Activated CD4-positive, alpha-beta memory T cell treated with anti-CD3 and anti-CD28 coated beads for 36 hours (primary cell): ENCODE measurements at regions of chr11 and their contacts with region 1.

Region 1: DNA sequence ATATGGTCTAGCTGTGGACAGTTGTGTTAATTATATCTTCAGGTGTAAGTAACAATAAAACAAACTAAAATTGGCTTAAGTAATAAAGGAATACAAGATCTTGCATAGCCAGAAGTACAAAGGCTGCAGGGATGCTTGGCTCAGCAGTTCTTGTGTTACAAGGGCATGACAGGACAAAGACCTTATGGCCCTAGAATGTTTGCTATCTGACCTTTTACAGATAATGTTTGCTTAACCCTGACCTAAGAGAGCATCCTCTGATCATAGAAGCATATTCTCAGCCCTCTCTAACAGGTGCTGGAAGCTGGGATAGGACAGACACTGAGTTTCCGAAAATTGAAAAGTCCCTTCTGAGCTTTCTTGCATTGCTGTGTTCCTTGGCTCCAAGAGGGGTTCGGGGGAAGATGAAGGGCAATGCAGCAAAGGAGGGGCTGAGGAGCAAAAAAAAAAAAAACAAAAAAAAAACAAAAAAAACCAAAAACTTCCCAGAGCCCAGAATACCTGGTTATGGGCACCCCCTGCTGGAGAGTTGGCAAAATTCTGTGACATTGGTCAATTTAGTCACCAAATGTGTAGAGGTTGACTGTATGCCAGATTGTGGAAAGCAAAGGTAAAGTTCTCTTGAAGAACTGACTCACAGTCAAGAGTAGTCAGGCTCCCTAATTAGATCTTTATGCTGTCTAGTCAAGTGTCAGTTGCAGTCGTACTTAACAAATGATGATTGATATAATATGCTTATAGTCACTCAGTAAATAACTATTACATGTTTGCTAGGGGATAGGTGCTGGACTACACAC is 10.4 kb upstream of the HIKESHI start:
- DNase-seq: peak; percentile 82
- H3K4me3 Mint-ChIP-seq: peak overlapping the region; percentile 30
- H3K27ac Mint-ChIP-seq: peak overlapping the region; percentile 95
- H3K4me1 Mint-ChIP-seq: peaks cover 68% of the 10 kb centered on the region
- H3K27me3 Mint-ChIP-seq: no peaks in the 10 kb centered on the region

Region 2: GRCh38 chr11:85752890-85753581 is 538.6 kb before region 1 on chr11:
- CTCF ChIA-PET with region 1: no interaction called
- POLR2A ChIA-PET with region 1: no interaction called
- intact Hi-C with region 1: loop called (anchors 1 kb)
- DNase-seq: peak; percentile 94
- H3K4me3 Mint-ChIP-seq: peak overlapping the region; percentile 70
- H3K27ac Mint-ChIP-seq: peak overlapping the region; percentile 96
- H3K4me1 Mint-ChIP-seq: peaks cover 95% of the 10 kb centered on the region
- H3K27me3 Mint-ChIP-seq: peaks cover 3% of the 10 kb centered on the region

Region 3: GRCh38 chr11:85867751-85868150 is 423.9 kb before region 1 on chr11:
- CTCF ChIA-PET with region 1: no interaction called
- POLR2A ChIA-PET with region 1: no interaction called
- intact Hi-C with region 1: no loop called
- DNase-seq: no peak
- H3K4me3 Mint-ChIP-seq: no peak overlapping the region
- H3K27ac Mint-ChIP-seq: no peak overlapping the region
- H3K4me1 Mint-ChIP-seq: peaks cover 3% of the 10 kb centered on the region
- H3K27me3 Mint-ChIP-seq: no peaks in the 10 kb centered on the region

Region 4: DNA sequence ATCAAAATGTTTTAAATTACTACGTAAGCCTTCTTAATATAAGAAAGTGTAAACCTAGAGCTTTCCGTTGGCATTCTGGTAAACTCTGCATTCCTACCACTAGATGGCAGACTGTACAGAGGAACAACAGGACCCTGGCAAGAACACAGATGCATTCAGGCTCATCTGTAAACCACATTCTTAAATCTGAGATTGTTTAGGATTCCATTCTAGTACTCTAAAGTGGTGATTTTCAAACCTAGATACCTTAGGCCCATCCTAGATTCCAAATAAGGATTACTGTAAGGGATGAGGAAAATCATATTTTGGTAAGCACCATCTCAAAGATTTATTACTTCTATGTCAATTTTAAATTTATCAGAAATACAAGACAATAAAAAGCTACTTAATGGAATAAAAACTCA is 249.7 kb before region 1 on chr11:
- CTCF ChIA-PET with region 1: interaction called, 17 read pairs
- POLR2A ChIA-PET with region 1: interaction called, 3 read pairs
- intact Hi-C with region 1: loop called (anchors 1 kb)
- DNase-seq: peak; percentile 48
- H3K4me3 Mint-ChIP-seq: no peak overlapping the region
- H3K27ac Mint-ChIP-seq: peak overlapping the region; percentile 58
- H3K4me1 Mint-ChIP-seq: peaks cover 71% of the 10 kb centered on the region
- H3K27me3 Mint-ChIP-seq: no peaks in the 10 kb centered on the region

Region 5: DNA sequence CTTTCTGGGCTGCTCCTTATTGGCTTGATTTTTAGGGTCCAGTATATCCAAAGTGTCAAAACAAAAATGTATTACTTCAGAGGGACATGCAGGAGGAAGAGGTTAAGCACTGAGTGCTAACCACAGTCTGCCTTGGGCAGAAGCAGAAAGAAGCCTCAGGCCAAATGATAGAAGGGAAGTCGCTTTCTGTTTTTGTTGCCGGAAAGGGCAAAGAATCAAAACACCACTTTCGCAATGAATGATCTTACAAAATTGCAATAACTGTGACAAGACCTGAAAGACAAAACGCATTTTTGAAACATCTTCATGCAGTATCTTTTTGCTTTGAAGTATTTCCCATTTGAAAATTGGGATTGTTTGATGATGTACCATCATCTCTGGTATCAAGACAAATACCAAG is 152.7 kb before region 1 on chr11:
- CTCF ChIA-PET with region 1: no interaction called
- POLR2A ChIA-PET with region 1: no interaction called
- intact Hi-C with region 1: loop called (anchors 1 kb)
- DNase-seq: peak; percentile 61
- H3K4me3 Mint-ChIP-seq: peak overlapping the region; percentile 20
- H3K27ac Mint-ChIP-seq: peak overlapping the region; percentile 70
- H3K4me1 Mint-ChIP-seq: peaks cover 45% of the 10 kb centered on the region
- H3K27me3 Mint-ChIP-seq: no peaks in the 10 kb centered on the region

Region 6: GRCh38 chr11:86218125-86219084 is 73.3 kb before region 1 on chr11:
- CTCF ChIA-PET with region 1: interaction called, 3 read pairs
- POLR2A ChIA-PET with region 1: interaction called, 4 read pairs
- intact Hi-C with region 1: loop called (anchors 1 kb)
- DNase-seq: peak; percentile 79
- H3K4me3 Mint-ChIP-seq: peak overlapping the region; percentile 56
- H3K27ac Mint-ChIP-seq: peak overlapping the region; percentile 92
- H3K4me1 Mint-ChIP-seq: peaks cover 76% of the 10 kb centered on the region
- H3K27me3 Mint-ChIP-seq: no peaks in the 10 kb centered on the region

Region 7: GRCh38 chr11:86302100-86302793 is 10.6 kb after region 1 on chr11 and contains the start of gene HIKESHI:
- CTCF ChIA-PET with region 1: interaction called, 6 read pairs
- POLR2A ChIA-PET with region 1: interaction called, 8 read pairs
- intact Hi-C with region 1: loop called (anchors 1 kb)
- DNase-seq: peak; percentile 95
- H3K4me3 Mint-ChIP-seq: peak within 1 kb of the TSS; percentile 100
- H3K27ac Mint-ChIP-seq: peak within 1 kb of the TSS; percentile 93
- H3K4me1 Mint-ChIP-seq: peaks cover 23% of the 10 kb centered on the region
- H3K27me3 Mint-ChIP-seq: no peaks in the 10 kb centered on the region
- total RNA-seq, gene HIKESHI: 53.1 to 55.1 TPM

Region 8: GRCh38 chr11:87037450-87038234 is 746.0 kb after region 1 on chr11 and contains the start of gene TMEM135:
- CTCF ChIA-PET with region 1: no interaction called
- POLR2A ChIA-PET with region 1: no interaction called
- intact Hi-C with region 1: loop called (anchors 5 kb)
- DNase-seq: peak; percentile 97
- H3K4me3 Mint-ChIP-seq: peak within 1 kb of the TSS; percentile 91
- H3K27ac Mint-ChIP-seq: peak within 1 kb of the TSS; percentile 87
- H3K4me1 Mint-ChIP-seq: peaks cover 32% of the 10 kb centered on the region
- H3K27me3 Mint-ChIP-seq: no peaks in the 10 kb centered on the region
- total RNA-seq, gene TMEM135: 16.7 to 27.5 TPM